Head of caudate nucleus (tissue), 42 donors: ENCODE measurements at regions of chr1 and their contacts with region 1.

Region 1: DNA sequence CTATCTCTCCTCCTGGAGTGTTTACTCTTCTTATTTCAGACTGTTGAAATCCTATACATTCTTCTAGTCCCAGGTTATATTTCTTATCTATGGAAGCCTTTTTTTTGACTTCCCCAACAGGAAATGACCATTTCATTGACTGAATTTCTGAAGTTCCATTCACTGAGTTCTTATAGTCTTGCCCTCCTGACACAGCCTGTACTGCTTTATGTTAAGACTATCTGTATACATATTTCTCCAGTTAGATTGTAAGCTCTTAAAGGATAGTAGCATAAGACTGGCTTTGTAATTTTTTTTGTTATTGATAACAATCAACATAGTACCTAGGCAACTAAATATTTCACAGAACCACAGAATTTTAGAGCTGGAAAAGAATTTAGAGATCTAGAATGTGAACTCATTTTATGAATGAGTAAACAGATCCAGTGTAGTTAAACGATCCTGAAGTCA is 14.9 kb upstream of the MACF1 start:
- DNase-seq: no peak

Region 2: DNA sequence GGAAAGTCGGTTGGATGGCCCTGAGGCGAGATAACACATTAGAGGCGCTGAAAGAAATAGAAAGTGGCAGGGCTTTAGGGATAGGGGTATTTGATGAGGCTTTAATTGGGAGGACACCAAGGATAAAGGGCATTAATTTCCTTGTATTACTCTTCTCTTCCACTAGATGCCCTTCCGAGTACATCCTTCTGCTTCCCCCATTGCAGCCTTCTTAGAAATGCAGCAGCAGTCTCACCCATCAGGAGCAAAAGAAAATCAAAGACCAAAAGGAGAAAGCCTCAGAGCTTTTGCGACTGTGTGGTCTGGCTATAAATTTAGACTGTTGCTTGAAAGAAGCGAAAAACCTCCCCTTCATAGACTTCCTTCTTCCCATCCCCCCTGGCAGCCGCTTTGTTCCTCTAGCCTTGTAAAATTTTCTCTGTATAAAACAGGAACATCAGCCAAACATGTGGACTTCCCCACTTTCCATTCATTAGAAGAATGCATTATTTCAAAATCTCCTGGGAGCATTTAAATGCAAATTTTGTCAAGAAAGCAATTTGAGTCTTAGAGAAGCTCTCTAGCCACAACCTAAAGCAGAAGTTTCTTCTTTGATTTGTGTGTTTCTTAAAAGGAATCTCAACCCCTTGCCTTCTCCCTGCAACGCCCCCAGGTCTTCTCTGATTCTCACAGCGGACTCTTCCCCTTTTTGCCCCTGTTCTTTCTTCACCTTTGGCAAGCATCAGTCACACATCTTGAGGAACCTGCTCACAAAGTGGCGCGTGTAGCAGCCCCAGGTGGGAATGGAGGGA is 86.9 kb before region 1 on chr1:
- intact Hi-C with region 1: loop called (anchors 5 kb)
- DNase-seq: peak in 26 of 42 donors; percentile 24 to 84 (median 58)

Region 3: DNA sequence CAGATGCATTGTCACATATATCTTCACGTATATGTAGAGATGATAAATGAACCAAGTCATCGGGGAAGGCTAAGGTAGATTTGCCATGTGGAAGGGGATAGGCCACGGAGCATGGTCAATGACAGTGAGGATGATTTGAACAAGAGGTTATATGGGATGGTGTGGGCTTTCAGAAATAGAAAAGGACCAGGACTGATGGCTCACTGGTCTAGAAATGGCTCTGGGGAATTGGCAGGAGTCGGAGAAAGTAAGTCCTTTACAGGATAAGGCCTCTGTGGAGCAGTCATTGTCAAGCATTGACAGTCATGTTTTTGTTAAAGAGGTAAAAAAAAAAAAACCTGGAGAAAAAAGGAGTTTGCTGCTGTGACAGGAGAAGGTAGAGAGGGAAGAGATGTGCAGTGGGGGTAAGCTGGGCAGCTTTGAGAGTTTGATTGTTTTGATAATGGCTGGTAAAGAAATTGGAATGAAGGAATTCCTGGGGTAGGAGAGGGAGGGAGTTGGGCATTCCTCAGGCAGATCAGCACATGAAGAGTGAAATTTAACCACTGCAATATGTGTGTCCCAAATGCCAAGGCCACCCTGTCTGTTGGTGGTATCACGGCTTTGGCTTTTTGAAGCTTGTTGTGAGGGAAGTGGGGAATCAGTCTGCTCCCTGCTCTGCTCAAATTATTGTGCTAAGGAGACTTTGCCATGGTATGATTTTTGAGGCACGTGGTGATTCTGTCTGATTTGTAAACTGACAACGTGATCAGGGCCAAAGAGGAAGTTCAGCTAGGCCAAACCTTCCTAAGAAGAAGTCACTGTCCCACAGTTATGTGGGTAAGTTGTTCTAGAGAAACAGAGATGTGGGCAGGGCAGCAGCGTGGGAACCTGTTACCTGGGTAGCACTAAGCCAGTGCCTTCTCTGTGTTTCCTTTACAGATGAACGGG is 40.9 kb after region 1 on chr1:
- intact Hi-C with region 1: no loop called
- DNase-seq: peak in 10 of 42 donors; percentile 10 to 64 (median 28)

Region 4: DNA sequence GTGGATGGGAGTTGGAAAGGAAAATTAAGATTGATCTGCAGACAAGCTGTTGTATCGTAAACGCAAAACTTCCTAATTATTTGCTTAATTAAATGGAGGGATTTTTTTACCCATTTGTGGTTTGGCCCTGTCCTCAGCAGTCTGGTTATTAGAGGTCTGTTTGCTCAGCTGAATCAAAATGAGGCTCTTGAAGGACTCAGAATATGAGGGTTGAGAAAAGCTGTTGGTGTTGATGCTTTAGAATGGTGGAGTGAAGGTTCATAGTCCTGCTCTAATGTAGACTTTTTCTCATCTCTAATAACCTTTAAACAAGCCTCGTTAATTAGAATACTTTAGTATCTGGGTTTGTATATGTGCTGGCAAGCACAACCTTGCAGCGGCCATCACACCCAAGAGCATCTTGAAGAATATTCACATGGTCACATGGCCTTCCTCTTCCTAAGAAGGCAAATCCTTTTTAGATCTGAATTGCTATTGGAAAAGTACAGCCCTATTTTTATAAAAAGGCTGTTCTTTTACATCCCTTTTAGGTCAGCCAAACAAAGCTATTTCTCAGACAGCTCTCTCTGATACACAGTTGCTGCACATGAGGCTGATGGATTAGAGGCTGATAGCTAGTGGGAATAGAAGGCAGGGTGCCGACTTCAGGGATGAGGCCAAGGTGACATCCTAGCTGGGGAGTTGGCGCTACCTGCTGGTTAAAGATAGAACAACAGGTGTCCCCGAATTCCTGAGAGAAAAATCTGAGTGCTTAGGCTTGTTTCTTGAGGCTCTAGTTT is 68.7 kb after region 1 on chr1:
- intact Hi-C with region 1: loop called (anchors 5 kb)
- DNase-seq: peak; percentile 36 to 93 (median 79)